ENCODE measurements at regions of chr6 and their contacts with region 1.

Region 1: DNA sequence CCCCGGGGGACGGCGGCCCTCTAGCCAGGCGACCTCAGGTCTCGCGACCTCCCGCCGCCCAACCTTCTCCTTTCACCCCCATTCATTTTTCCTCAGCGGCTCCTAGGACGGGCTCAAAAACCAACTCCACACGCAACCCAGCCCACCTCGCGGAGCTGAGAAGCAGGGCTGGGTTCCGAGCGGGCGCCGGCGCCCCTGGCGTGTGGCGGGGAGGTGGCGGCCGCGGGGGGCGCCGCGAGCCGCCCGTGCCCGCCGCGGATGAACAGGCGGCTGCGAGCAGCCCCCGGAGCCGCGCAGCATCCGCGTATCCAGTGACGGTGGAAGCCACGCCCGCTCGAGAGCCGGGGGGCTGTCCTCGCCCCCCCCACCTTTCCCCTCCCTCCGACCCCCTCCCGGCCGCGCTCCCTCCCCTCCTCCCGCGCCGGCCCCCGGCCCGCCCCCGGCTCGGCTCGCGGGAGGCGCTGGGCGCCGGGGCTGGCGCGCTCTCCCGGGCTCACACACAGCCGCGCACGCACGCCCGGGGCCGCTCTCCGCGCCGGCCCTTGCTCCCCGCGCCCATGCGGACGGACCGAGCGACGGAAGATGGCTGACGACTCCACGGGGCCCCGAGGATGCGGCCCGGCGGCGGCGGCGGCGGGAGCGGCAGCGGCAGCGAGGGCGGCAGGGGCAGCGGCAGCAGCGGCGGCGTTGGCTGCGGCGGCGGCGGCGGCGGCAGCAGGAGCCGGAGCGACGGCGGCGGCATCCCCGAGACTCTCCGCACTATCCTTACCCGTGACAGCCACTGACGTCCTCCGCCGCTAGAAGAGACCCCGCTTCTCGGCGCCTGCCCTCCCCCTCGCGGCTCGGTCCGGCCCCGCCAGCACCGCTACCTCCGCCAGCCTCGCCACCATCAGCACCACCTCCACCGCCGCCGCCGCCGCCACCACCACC is at the start of gene SOBP:
- DNase-seq: peak; percentile 77 to 87
- ATAC-seq: peak; percentile 42 to 66 (median 55)
- H3K4me3 ChIP-seq: peak within 1 kb of the TSS; percentile 77
- H3K27ac ChIP-seq: peak within 1 kb of the TSS; percentile 82
- H3K4me1 ChIP-seq: peaks cover 19% of the 10 kb centered on the region
- H3K27me3 ChIP-seq: peaks cover 0 to 4% (median 0%) of the 10 kb centered on the region in 3 donors
- CTCF ChIP-seq: no peak
- total RNA-seq, gene SOBP: 14.8 to 27.6 (median 23.2) TPM

Region 2: DNA sequence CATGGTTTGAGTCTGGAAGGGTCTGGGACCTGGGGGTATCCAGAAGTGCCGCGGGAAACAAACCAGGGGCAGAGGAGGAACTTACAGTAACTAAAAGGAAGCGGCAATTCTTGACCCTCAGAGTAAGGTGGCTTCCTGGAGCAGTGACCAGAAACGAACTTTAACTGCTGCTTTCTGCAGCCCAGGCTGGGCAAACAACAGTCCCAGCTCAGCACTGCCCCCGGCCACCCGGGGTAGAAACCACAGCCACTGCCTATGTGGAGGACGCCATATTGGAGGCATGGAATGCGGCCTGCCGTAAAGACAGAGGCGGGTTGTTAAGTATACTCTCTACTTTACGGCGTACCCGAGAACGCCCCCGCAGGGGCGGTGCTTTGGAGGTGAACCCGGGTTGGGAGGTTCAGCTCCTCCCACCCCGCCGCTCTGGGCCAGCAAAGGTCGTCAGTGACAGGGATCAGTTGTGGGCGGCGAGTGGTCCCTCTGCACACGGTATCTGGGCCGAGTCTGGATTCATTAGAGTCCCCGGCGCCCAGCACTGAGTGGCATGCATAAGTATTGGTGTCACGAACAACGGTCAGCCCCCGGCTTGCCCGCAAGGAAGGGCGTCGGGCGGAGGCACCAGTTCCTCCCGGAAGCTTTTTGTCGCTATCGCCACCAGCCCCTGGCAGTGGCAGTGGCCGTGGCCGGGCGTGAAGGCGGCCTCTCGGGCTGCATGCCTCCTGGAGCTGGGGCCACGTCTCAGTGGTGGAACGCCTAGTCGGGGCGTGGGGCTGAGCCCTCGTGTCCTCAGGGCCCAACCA is 30.4 kb before region 1 on chr6 and contains the start of gene PDSS2:
- intact Hi-C with region 1: loop called (anchors 2 to 5 kb)
- DNase-seq: peak; percentile 99 to 100
- ATAC-seq: peak; percentile 97 to 99 (median 98)
- H3K4me3 ChIP-seq: peak within 1 kb of the TSS; percentile 90
- H3K27ac ChIP-seq: peak within 1 kb of the TSS; percentile 96
- H3K4me1 ChIP-seq: peaks cover 5% of the 10 kb centered on the region
- H3K27me3 ChIP-seq: no peaks in the 10 kb centered on the region
- CTCF ChIP-seq: peak; percentile 50
- total RNA-seq, gene PDSS2: 7.6 to 10.4 (median 9.8) TPM

Region 3: DNA sequence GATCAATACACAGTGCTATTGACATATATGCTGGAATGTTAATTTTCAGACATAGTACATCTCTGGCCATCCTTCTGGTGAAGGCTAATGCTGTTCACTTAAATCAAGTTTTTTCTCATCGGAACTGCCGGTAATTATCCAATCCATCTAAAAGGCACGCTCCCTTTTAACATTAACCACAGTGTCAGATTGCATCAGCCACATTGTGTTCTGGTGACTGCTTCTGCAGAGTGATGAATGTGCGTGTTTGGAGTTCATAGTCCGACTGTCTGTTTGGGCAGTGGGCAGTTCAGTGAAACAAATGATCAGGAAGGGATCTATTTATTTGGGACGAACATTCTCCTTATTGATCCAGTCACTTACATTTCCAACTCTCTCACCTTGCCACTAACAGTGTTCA is 49.5 kb after region 1 on chr6:
- intact Hi-C with region 1: loop called (anchors 2 to 5 kb)
- DNase-seq: no peak
- ATAC-seq: peak; percentile 66 to 85 (median 75)
- H3K4me3 ChIP-seq: peak overlapping the region; percentile 28
- H3K27ac ChIP-seq: peak overlapping the region; percentile 53
- H3K4me1 ChIP-seq: peaks cover 59% of the 10 kb centered on the region
- H3K27me3 ChIP-seq: no peaks in the 10 kb centered on the region
- CTCF ChIP-seq: no peak

Region 4: DNA sequence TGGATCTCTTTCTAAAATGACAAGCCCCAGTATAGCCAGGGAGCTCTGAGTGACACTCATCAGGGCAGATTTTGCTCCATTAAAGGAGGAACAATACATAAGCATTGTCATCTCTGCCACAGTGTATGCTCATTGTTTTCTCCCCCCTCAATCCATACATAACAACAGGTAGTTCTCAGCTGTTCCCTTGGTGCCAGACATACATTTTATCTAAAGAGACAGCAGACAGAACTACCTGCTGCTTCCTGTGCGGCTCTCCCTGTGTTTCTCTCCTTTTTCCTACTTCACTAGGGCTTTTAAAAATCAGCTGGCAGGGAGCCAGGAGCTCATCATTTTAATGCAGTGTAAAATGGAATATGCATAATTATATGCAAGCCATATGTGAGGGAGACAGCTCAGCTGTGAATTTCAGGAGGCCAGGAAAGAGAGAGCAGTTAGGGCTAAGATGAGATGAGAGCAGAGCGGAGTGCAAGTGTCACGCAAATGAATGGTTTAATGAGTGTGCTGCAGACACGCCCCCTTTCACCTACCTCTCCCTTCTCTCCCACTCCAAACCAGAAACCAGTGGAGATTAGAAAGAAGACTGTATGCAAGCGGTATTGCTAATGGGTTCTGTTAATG is 96.0 kb after region 1 on chr6:
- intact Hi-C with region 1: no loop called
- DNase-seq: no peak
- ATAC-seq: peak in 1 of 4 donors; percentile 41
- H3K4me3 ChIP-seq: no peak overlapping the region
- H3K27ac ChIP-seq: no peak overlapping the region
- H3K4me1 ChIP-seq: peaks cover 17% of the 10 kb centered on the region
- H3K27me3 ChIP-seq: no peaks in the 10 kb centered on the region
- CTCF ChIP-seq: no peak

Region 5: DNA sequence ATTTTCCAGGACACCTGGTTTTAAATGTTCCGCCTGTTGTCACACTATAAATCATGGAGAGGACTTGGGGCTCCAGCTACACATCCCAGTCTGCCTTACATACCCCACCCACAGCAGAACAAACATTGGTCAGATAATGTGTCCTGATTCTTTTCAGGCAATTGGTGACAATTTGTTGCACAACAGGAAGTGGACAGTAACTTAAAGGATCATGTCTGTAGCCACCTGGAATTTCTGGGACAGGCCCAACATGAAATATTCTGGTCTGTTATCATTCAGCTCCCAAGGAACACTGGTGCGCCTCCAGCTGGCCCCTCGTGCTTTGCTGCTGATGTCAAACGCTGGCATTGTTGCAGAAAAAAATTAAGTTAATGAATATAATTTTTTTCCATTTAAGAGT is 117.2 kb after region 1 on chr6:
- intact Hi-C with region 1: no loop called
- DNase-seq: peak in 1 of 2 donors; percentile 26
- ATAC-seq: peak; percentile 59 to 67 (median 64)
- H3K4me3 ChIP-seq: no peak overlapping the region
- H3K27ac ChIP-seq: peak overlapping the region; percentile 40
- H3K4me1 ChIP-seq: peaks cover 51% of the 10 kb centered on the region
- H3K27me3 ChIP-seq: no peaks in the 10 kb centered on the region
- CTCF ChIP-seq: no peak

Region 6: GRCh38 chr6:107653183-107653580 is 163.3 kb after region 1 on chr6:
- intact Hi-C with region 1: loop called in 1 of 2 experiments (anchors 5 kb)
- DNase-seq: peak; percentile 56 to 85
- ATAC-seq: peak; percentile 89 to 93 (median 91)
- H3K4me3 ChIP-seq: peak overlapping the region; percentile 40
- H3K27ac ChIP-seq: peak overlapping the region; percentile 94
- H3K4me1 ChIP-seq: peaks cover 48% of the 10 kb centered on the region
- H3K27me3 ChIP-seq: no peaks in the 10 kb centered on the region
- CTCF ChIP-seq: no peak

Region 7: GRCh38 chr6:107660839-107661238 is 170.9 kb after region 1 on chr6:
- intact Hi-C with region 1: loop called in 1 of 2 experiments (anchors 5 kb)
- DNase-seq: peak; percentile 55 to 73
- ATAC-seq: peak; percentile 79 to 87 (median 85)
- H3K4me3 ChIP-seq: no peak overlapping the region
- H3K27ac ChIP-seq: peak overlapping the region; percentile 64
- H3K4me1 ChIP-seq: peaks cover 75% of the 10 kb centered on the region
- H3K27me3 ChIP-seq: no peaks in the 10 kb centered on the region
- CTCF ChIP-seq: no peak